Lower leg skin (tissue), 4 donors: ENCODE measurements at regions of chr10 and their contacts with region 1.

Region 1: GRCh38 chr10:100518761-100519241 is 860 bp downstream of the SEC31B start:
- DNase-seq: peak in 1 of 2 donors; percentile 65
- H3K4me3 ChIP-seq: no peak overlapping the region
- CTCF ChIP-seq: peak in 1 of 3 donors; percentile 27
- POLR2A ChIP-seq: no peak

Region 2: DNA sequence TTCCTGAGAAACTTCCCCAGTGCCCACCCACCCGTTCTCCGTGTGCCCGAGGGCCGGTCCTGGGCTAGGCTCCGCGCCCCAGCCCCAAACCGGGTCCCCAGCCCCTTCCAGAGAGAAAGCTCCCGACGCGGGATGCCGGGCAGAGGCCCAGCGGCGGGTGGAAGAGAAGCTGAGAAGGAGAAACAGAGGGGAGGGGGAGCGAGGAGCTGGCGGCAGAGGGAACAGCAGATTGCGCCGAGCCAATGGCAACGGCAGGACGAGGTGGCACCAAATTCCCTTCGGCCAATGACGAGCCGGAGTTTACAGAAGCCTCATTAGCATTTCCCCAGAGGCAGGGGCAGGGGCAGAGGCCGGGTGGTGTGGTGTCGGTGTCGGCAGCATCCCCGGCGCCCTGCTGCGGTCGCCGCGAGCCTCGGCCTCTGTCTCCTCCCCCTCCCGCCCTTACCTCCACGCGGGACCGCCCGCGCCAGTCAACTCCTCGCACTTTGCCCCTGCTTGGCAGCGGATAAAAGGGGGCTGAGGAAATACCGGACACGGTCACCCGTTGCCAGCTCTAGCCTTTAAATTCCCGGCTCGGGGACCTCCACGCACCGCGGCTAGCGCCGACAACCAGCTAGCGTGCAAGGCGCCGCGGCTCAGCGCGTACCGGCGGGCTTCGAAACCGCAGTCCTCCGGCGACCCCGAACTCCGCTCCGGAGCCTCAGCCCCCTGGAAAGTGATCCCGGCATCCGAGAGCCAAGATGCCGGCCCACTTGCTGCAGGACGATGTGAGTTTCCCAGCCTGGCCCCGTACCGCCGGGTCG is 171.8 kb before region 1 on chr10 and contains the start of gene SCD:
- intact Hi-C with region 1: loop called (anchors 5 kb)
- DNase-seq: peak; percentile 74 to 93
- H3K4me3 ChIP-seq: peak within 1 kb of the TSS; percentile 50
- CTCF ChIP-seq: no peak
- POLR2A ChIP-seq: no peak
- total RNA-seq, gene SCD: 23.8 to 56.7 (median 32.3) TPM

Region 3: DNA sequence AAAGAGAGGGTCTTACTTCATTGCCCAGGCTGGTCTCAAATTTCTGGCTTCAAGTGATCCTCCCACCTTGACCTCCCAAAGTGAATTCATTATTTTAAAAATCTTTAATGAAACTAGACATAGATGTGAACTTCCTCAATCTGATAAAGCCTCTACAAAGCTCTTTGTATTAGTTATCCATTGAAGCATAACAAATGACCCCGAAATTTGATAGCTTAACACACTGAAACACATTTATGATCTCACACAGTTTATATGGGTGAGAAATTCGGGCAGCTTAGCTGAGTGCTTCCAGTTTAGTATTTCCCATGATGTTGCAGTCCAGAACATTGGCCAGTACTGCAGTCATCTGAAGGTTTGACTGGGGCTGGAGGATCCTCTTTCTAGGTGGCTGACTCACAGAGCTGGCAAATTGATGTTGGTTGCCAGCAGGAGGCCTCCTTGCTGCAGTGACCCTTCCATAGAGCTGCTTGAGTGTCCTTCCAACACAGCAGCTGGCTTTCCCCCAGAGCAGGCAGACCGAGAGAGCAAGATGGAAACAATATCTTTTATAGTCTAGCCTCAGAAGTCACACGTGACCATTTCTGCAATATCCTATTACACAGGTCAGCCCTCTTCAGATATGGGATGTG is 72.6 kb before region 1 on chr10:
- intact Hi-C with region 1: loop called (anchors 10 kb)
- DNase-seq: no peak
- H3K4me3 ChIP-seq: no peak overlapping the region
- CTCF ChIP-seq: no peak
- POLR2A ChIP-seq: no peak

Region 4: GRCh38 chr10:102185811-102186527 is 1667.2 kb after region 1 on chr10:
- intact Hi-C with region 1: no loop called
- DNase-seq: peak in 1 of 2 donors; percentile 15
- H3K4me3 ChIP-seq: no peak overlapping the region
- CTCF ChIP-seq: no peak
- POLR2A ChIP-seq: no peak